Activated CD8-positive, alpha-beta memory T cell treated with anti-CD3 and anti-CD28 coated beads, Interleukin-2, amount 10 ng/mL, durations not matched to agents 7 days and 5 days (primary cell): ENCODE measurements at regions of chr5 and their contacts with region 1.

Region 1: GRCh38 chr5:33969572-33970452 is 14.7 kb downstream of the SLC45A2 start:
- DNase-seq: no peak
- ATAC-seq: peak; percentile 78
- H3K4me3 Mint-ChIP-seq: no peak overlapping the region
- H3K27ac Mint-ChIP-seq: no peak overlapping the region
- H3K4me1 Mint-ChIP-seq: peaks cover 18% of the 10 kb centered on the region
- H3K27me3 Mint-ChIP-seq: peaks cover under 1% of the 10 kb centered on the region

Region 2: DNA sequence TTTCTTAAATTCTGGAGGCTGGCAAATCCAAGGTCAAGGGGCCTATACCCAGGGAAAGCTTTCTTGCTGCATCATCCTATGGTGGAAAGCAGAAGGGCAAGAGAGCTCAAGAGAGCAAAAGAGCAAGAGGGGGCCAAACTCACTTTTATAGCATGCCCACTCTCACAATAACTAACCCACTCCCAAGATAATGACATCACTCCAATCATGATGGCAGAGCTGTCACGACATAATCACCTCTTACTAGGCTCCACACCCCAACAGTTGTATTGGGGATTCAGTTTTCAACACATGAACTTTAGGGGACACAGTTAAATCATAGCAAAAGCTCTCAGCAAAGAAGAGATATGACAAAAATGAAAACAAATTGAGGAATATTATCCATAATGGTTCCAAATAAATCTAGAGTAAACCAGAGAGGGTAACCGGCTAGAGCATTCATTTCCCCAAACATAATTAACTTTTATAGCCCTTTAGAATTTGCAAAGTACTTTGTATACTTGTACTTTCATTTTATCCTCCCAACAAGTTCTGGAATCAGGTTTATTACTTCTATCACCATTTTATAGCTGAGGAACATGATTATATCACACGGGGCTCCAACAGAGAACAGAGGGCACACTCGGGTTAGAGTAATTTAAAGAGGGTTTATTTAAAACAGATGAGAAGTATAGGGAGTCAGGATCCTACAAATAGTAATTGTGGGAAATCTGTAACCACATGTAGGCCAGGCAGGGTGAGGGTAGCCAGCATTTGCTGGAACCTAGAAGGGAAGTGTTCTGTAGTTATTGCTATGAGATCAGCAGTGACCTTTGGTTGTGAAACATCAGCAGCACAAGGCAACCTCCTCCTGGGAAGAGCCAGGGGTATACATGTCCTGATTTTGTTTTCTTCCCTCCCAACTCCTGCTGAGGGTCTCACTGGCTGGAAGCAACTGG is 536.2 kb before region 1 on chr5:
- CTCF ChIA-PET with region 1: interaction called, 14 read pairs
- DNase-seq: no peak
- ATAC-seq: no peak
- H3K4me3 Mint-ChIP-seq: no peak overlapping the region
- H3K27ac Mint-ChIP-seq: no peak overlapping the region
- H3K4me1 Mint-ChIP-seq: peaks cover 10% of the 10 kb centered on the region
- H3K27me3 Mint-ChIP-seq: peaks cover 6% of the 10 kb centered on the region

Region 3: DNA sequence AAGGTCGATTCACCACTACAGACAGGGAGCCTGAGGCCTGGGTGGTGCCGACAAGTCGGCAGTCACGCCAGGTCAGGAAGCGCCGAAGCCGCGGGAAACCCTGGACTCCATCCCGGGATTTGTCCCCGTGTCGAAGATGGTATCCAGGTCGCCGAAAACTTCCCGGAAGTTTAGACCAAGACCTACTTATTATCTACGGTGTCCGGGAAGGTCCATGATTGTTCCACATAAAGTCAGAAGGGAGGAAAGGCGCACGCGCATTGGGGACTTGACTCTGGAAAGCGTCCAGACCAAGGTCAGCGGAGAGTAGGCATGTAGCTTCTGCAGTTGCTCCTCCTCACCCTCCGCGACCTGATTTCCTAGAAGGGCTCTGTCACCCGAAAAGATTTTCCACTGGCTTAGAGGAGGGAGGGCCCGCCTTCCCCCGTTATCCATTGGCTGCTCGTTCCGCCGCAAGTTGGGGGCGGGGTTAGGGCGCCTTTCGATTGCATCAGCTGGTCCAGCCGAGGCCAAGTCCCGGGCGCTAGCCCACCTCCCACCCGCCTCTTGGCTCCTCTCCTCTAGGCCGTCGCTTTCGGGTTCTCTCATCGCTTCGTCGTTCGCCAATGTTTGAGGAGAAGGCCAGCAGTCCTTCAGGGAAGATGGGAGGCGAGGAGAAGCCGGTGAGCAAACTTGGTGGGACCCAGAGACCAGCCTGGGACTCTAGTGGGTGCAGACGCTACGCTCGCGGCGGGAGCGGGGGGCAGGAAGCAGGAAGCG is 529.2 kb before region 1 on chr5 and contains the start of gene TARS1:
- CTCF ChIA-PET with region 1: interaction called, 14 read pairs
- DNase-seq: peak; percentile 97
- ATAC-seq: peak; percentile 97
- H3K4me3 Mint-ChIP-seq: no peak within 1 kb of the TSS
- H3K27ac Mint-ChIP-seq: no peak within 1 kb of the TSS
- H3K4me1 Mint-ChIP-seq: peaks cover 38% of the 10 kb centered on the region
- H3K27me3 Mint-ChIP-seq: no peaks in the 10 kb centered on the region
- total RNA-seq, gene TARS1: 157 to 240 TPM

Region 4: DNA sequence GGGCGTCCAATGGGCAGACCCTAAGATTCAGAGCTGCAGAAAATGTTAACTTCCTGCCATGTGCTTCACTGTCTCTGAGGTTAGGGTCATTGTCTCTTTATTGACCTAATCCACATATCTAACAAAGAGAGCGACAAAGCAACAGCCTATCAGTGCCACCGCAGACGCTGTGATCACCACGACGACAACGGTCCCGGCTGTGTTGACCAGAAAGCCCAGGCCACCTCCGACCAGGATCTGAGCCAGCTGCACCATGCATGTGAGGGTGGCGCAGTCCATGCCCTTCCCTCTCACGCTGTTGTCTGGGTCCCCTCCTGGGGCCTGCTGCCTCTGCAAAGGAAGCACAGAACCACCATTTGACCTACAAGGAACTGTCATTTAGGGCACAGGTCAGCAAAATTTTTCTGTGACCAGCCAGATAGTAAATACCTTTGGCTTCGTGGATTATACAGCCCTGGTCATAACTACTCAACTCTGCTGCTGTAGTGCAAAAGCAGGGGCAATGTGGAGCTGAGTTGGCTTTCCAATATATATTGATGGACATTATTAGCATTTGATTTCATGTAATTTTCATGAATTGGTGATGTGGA is 25.2 kb before region 1 on chr5:
- CTCF ChIA-PET with region 1: no interaction called
- DNase-seq: no peak
- ATAC-seq: no peak
- H3K4me3 Mint-ChIP-seq: no peak overlapping the region
- H3K27ac Mint-ChIP-seq: no peak overlapping the region
- H3K4me1 Mint-ChIP-seq: no peaks in the 10 kb centered on the region
- H3K27me3 Mint-ChIP-seq: peaks cover 45% of the 10 kb centered on the region

Region 5: DNA sequence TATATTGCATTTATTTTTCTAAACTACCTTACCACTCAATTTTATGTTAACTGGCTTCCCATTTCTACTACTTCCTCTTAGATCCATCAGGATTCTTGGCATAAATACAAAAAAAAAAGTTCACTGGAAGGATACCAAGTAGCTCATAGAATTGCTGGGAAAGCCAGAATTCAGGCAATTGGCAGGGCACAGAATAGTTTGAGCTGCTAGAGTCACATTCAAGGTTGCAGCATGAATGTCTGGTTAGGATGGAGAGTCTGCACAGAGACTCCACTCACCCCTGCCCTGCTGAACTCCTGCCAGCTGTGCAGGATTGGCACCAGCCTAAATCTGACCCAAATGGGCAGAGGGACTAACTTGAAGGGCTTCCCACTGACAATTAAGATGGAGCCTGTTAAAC is 43.0 kb after region 1 on chr5:
- CTCF ChIA-PET with region 1: no interaction called
- DNase-seq: no peak
- ATAC-seq: no peak
- H3K4me3 Mint-ChIP-seq: no peak overlapping the region
- H3K27ac Mint-ChIP-seq: no peak overlapping the region
- H3K4me1 Mint-ChIP-seq: peaks cover 29% of the 10 kb centered on the region
- H3K27me3 Mint-ChIP-seq: no peaks in the 10 kb centered on the region